B cell (primary cell): ENCODE measurements at regions of chr15 and their contacts with region 1.

Region 1: GRCh38 chr15:101251830-101252820 is at the start of gene CHSY1:
- DNase-seq: peak; percentile 96
- ATAC-seq: peak; percentile 81
- H3K4me3 ChIP-seq: peak within 1 kb of the TSS; percentile 50 to 81 (median 73)
- H3K4me3 Mint-ChIP-seq: peak within 1 kb of the TSS; percentile 93
- H3K27ac ChIP-seq: peak within 1 kb of the TSS; percentile 30 to 53
- H3K27ac Mint-ChIP-seq: peak within 1 kb of the TSS; percentile 97
- H3K4me1 ChIP-seq: peaks cover 29 to 31% of the 10 kb centered on the region in 2 donors
- H3K4me1 Mint-ChIP-seq: peaks cover 30% of the 10 kb centered on the region
- H3K27me3 ChIP-seq: peaks cover 0 to 4% (median 0%) of the 10 kb centered on the region in 4 experiments
- H3K27me3 Mint-ChIP-seq: no peaks in the 10 kb centered on the region
- CTCF ChIP-seq: no peak
- total RNA-seq, gene CHSY1: 18.9 and 20.3 TPM in 2 replicates

Region 2: DNA sequence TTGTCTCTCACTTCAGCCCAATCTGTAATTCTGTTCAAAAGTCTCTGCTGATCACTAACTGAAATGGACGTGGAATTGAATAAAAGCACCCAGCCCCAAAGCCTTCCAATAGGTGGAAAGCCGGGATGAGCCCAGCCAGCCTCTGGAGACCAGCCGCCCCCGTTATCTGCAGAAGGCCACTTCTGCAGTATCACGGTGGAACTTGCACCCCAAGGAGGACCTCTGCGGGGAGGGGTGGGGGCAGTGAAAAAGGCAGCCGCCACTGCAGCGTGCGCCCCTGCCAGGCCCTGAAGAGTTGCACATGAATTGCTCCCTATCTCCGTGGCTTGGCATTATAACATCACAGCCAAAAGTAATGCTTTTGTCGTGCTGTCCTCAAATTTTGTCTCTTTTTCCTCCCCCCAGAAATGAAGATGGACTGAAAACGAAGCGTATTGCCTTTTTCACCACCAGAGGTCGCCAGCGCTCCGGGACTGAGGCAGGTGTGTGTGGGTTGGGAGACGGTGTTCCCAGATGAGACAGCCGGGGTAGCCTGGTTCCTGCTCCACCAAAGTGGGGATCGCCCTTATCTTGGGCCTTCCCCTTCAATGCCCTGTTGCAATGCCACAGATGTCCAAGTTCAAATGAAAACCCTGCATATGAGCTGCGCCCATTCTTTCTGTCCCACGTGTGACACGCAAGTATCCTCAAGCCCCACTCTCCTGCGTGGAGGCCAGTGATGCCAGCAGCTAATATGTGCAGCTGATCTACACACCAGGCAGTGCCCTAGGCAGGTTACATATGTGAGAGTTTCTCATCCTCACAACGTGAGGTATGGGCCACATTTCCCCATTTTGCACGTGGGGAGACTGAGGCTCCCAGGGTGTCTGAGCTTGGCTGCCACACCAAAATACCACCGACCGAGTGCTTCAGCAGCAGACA is 236.9 kb before region 1 on chr15:
- CTCF ChIA-PET with region 1: interaction called, 133 read pairs
- POLR2A ChIA-PET with region 1: no interaction called
- intact Hi-C with region 1: loop called (anchors 1 kb)
- DNase-seq: peak; percentile 73
- ATAC-seq: peak; percentile 65
- H3K4me3 ChIP-seq: no peak overlapping the region
- H3K4me3 Mint-ChIP-seq: no peak overlapping the region
- H3K27ac ChIP-seq: no peak overlapping the region
- H3K27ac Mint-ChIP-seq: no peak overlapping the region
- H3K4me1 ChIP-seq: no peaks in the 10 kb centered on the region
- H3K4me1 Mint-ChIP-seq: no peaks in the 10 kb centered on the region
- H3K27me3 ChIP-seq: no peaks in the 10 kb centered on the region
- H3K27me3 Mint-ChIP-seq: no peaks in the 10 kb centered on the region
- CTCF ChIP-seq: peak; percentile 83

Region 3: DNA sequence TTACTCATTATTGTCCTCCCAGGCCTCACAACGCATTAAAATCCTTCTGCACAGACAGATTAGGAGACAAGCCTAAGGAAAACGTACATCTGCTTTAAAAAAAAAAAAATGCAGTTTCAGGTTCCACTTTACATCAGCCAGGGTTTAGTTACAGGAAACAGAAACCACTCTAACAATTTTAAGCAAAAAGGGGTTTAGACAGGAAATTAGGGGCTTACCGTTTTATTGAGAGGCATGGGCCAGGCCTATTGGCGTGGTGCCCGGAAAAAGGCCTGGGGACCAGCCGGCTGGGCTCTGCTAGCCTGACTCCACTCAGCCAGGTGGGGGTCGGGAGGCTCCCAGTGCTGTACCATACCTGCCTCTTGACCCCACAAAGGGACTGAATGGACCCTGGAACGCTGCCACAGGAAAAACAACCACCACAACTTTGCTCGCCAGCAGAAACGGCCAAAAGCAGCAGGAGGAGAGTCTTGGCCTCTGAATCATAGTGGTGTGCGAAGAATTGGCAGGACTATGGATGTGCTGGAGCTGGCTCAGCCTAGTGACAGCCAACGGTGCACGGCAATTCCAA is 124.5 kb before region 1 on chr15:
- CTCF ChIA-PET with region 1: interaction called, 4 read pairs
- POLR2A ChIA-PET with region 1: no interaction called
- intact Hi-C with region 1: loop called (anchors 2 kb)
- DNase-seq: peak; percentile 76
- ATAC-seq: peak; percentile 80
- H3K4me3 ChIP-seq: peak overlapping the region in 3 of 5 experiments; percentile 23 to 49 (median 27)
- H3K4me3 Mint-ChIP-seq: peak overlapping the region; percentile 81
- H3K27ac ChIP-seq: peak overlapping the region; percentile 95 to 97
- H3K27ac Mint-ChIP-seq: peak overlapping the region; percentile 98
- H3K4me1 ChIP-seq: peaks cover 65 to 67% of the 10 kb centered on the region in 2 donors
- H3K4me1 Mint-ChIP-seq: peaks cover 69% of the 10 kb centered on the region
- H3K27me3 ChIP-seq: no peaks in the 10 kb centered on the region
- H3K27me3 Mint-ChIP-seq: no peaks in the 10 kb centered on the region
- CTCF ChIP-seq: no peak

Region 4: GRCh38 chr15:101277038-101277882 is 25.1 kb after region 1 on chr15 and contains the start of gene SELENOS:
- CTCF ChIA-PET with region 1: interaction called, 3 read pairs
- POLR2A ChIA-PET with region 1: interaction called, 6 read pairs
- intact Hi-C with region 1: loop called (anchors 1 kb)
- DNase-seq: peak; percentile 91
- ATAC-seq: peak; percentile 97
- H3K4me3 ChIP-seq: peak within 1 kb of the TSS; percentile 68 to 96 (median 84)
- H3K4me3 Mint-ChIP-seq: peak within 1 kb of the TSS; percentile 96
- H3K27ac ChIP-seq: peak within 1 kb of the TSS; percentile 39 to 85
- H3K27ac Mint-ChIP-seq: peak within 1 kb of the TSS; percentile 84
- H3K4me1 ChIP-seq: peaks cover 10 to 20% of the 10 kb centered on the region in 2 donors
- H3K4me1 Mint-ChIP-seq: peaks cover 12% of the 10 kb centered on the region
- H3K27me3 ChIP-seq: no peaks in the 10 kb centered on the region
- H3K27me3 Mint-ChIP-seq: no peaks in the 10 kb centered on the region
- CTCF ChIP-seq: no peak
- total RNA-seq, gene SELENOS: 26.8 and 27.3 TPM in 2 replicates